SK-N-SH (cell line): ENCODE measurements at regions of chr7 and their contacts with region 1.

Region 1: DNA sequence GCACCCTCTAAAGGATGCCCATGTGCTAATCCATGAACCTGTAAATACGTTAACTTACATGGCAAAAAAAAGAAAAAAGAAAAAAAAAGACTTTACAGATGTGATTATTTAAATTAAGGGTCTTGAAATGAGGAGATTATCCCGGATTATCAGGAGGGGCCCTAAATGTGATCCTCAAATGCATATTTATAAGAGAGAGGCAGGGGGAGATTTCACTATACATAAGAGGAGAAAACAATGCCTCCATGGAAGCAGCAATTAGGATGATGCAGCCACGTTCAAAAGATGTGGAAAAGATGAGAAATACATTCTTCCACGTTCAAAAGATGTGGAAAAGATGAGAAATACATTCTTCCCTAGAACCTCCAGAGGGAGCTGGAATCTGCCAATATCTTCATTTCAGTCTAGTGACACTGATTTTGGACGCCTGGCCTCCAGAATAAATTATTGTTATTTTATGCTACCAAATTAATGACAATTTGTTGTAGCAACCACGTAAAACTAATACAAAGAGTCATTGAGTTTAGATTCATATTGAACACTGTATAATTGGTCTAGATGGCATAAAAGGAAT is 328.4 kb upstream of the GNAI1 start:
- DNase-seq: no peak
- H3K4me3 ChIP-seq: no peak overlapping the region
- H3K27ac ChIP-seq: no peak overlapping the region
- H3K4me1 ChIP-seq: no peaks in the 10 kb centered on the region; a peak in 2 of 4 replicates
- H3K27me3 ChIP-seq: no peaks in the 10 kb centered on the region
- CTCF ChIP-seq: peak; percentile 67
- EP300 ChIP-seq: no peak
- RAD21 ChIP-seq: peak; percentile 89

Region 2: GRCh38 chr7:80018941-80019752 is 212.9 kb after region 1 on chr7:
- CTCF ChIA-PET with region 1: interaction called, 12 read pairs
- POLR2A ChIA-PET with region 1: no interaction called
- DNase-seq: peak; percentile 80
- H3K4me3 ChIP-seq: no peak overlapping the region
- H3K27ac ChIP-seq: peak overlapping the region in 1 of 2 experiments; percentile 23; a peak in 1 of 4 replicates
- H3K4me1 ChIP-seq: peaks cover 0 to 2% of the 10 kb centered on the region in 2 experiments; a peak in 2 of 4 replicates
- H3K27me3 ChIP-seq: no peaks in the 10 kb centered on the region
- CTCF ChIP-seq: peak; percentile 100
- EP300 ChIP-seq: no peak
- RAD21 ChIP-seq: peak; percentile 95

Region 3: GRCh38 chr7:80027611-80028173 is 221.4 kb after region 1 on chr7:
- CTCF ChIA-PET with region 1: interaction called, 10 read pairs
- POLR2A ChIA-PET with region 1: no interaction called
- DNase-seq: no peak
- H3K4me3 ChIP-seq: no peak overlapping the region
- H3K27ac ChIP-seq: no peak overlapping the region
- H3K4me1 ChIP-seq: no peaks in the 10 kb centered on the region
- H3K27me3 ChIP-seq: no peaks in the 10 kb centered on the region
- CTCF ChIP-seq: no peak
- EP300 ChIP-seq: no peak
- RAD21 ChIP-seq: no peak